Right lobe of liver (tissue), 6 donors: ENCODE measurements at regions of chr14 and their contacts with region 1.

Region 1: DNA sequence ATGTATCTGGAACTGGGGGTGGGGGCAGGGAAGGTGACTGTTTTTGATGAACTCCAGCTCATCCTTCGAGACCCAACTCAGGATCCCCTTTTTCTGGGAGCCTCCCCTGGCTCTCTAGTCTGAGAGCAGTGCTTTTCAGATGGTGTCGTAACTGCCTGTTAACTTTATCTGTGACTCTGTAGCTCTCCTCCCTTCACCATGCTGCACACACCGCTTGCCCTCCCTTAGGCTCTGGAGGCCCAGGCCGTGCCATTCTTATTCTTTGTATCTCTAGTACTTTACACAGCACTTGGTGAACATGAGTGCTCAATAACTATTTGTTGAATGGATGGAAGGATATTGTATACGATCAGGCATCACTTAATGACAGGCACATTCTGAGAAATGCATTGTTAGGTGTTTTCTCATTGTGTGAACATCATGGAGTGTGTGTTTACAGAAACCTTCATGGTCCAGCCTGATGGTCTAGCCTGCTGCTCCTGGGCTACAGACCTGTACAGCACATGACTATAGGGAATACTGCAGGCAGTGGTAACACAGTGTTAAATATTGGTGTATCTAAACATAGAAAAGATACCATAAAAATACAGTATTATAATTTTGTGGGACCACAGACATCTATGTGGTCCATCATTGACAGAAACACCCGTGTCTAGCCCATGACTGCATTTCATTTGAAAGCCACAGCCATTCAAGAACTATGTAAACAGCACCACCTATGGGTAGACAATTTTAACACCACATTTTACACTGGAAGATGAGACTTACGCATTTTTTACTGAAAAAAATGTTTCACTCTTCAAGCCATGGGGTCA is 91.8 kb downstream of the EML1 start:
- DNase-seq: no peak
- ATAC-seq: peak; percentile 88 to 95 (median 92)
- H3K4me3 ChIP-seq: no peak overlapping the region
- H3K27ac ChIP-seq: no peak overlapping the region
- H3K4me1 ChIP-seq: no peaks in the 10 kb centered on the region
- H3K27me3 ChIP-seq: no peaks in the 10 kb centered on the region
- CTCF ChIP-seq: peak; percentile 70 to 87 (median 74)
- POLR2A ChIP-seq: no peak

Region 2: DNA sequence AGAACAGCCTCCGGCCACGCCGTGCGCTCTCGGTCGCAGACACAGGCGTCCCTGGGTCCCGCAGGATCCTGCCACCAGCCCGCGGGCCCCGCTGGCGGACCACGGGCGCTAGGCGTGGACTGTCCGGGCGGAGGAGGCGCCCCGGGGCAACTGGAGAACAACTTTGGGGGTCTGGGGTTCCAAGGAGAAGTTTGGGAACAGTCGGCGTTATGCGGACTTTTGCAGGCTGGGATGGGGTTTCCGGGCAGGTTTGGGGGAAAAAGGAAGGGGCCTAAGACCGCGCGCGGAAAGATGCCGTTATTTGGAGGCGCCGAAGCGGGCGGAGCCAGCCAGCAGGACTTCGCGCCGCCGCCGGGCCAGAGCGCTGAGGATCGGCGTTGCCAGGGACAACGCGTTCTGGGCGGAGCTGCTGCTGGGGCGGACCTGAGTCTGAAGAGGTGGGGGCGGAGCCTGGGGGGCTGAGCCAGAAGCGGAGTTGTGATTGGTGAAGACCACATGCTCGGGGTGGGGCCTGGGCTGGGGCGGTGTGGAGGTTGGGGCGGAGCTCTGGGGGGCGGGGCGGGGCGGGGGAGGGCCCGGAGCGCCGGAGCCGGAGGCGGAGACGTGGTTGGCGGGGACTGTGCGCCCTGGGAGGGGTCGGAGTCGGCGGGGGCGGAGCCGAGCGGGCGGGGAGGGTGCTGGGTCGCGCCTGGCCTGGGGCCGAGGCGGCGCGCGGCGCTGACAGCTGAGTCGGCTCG is 201.3 kb before region 1 on chr14 and contains the start of gene CYP46A1:
- intact Hi-C with region 1: loop called in 1 of 2 experiments (anchors 5 kb)
- DNase-seq: peak; percentile 100
- ATAC-seq: peak; percentile 94 to 97 (median 96)
- H3K4me3 ChIP-seq: peak within 1 kb of the TSS; percentile 69 to 87 (median 83)
- H3K27ac ChIP-seq: peak within 1 kb of the TSS; percentile 58 to 66 (median 63)
- H3K4me1 ChIP-seq: peaks cover 0 to 10% (median 2%) of the 10 kb centered on the region in 4 donors
- H3K27me3 ChIP-seq: no peaks in the 10 kb centered on the region
- CTCF ChIP-seq: no peak
- POLR2A ChIP-seq: no peak
- total RNA-seq, gene CYP46A1: 0.06 to 1.6 (median 0.42) TPM in 5 of 6 experiments, not detected in the other

Region 3: GRCh38 chr14:99729991-99730868 is 154.8 kb before region 1 on chr14:
- intact Hi-C with region 1: loop called (anchors 5 kb)
- DNase-seq: peak; percentile 71 to 72 (median 71)
- ATAC-seq: peak; percentile 74 to 83 (median 82)
- H3K4me3 ChIP-seq: peak overlapping the region; percentile 34 to 60 (median 47)
- H3K27ac ChIP-seq: no peak overlapping the region
- H3K4me1 ChIP-seq: peaks cover 0 to 6% (median 0%) of the 10 kb centered on the region in 4 donors
- H3K27me3 ChIP-seq: no peaks in the 10 kb centered on the region
- CTCF ChIP-seq: peak; percentile 88 to 96 (median 90)
- POLR2A ChIP-seq: no peak

Region 4: GRCh38 chr14:99853206-99853605 is 31.8 kb before region 1 on chr14:
- intact Hi-C with region 1: no loop called
- DNase-seq: no peak
- ATAC-seq: peak in 2 of 4 donors; percentile 27 to 50
- H3K4me3 ChIP-seq: no peak overlapping the region
- H3K27ac ChIP-seq: no peak overlapping the region
- H3K4me1 ChIP-seq: no peaks in the 10 kb centered on the region
- H3K27me3 ChIP-seq: no peaks in the 10 kb centered on the region
- CTCF ChIP-seq: no peak
- POLR2A ChIP-seq: no peak